ENCODE measurements at regions of chr5 and their contacts with region 1.

Region 1: GRCh38 chr5:36944607-36945225 is 68.1 kb downstream of the NIPBL start:
- DNase-seq: peak; percentile 60
- H3K4me3 Mint-ChIP-seq: no peak overlapping the region
- H3K27ac Mint-ChIP-seq: no peak overlapping the region
- H3K4me1 Mint-ChIP-seq: peaks cover 19% of the 10 kb centered on the region
- H3K27me3 Mint-ChIP-seq: no peaks in the 10 kb centered on the region
- CTCF ChIP-seq: peak; percentile 37

Region 2: DNA sequence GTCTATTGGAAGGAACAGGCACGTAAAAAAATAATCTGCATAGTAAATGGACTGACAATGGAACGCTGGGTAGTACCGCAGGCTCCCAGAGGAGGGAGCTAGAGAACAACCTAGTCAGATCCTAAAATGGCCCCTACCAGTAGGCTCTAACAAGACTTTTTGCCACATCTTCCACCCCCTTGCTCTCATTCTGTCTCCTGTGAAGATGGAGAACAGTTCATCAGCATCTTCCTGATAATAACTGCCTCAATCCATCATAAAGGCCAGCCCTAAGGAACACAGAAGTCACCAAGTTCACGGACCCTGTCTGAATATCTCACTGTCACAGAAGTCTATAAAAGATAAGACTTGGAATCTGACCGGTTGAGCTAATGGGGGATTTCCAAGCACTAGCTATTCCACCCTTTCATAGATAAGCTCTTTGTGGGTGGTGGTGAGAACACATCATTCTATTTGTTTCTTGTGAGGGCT is 204.9 kb before region 1 on chr5:
- CTCF ChIA-PET with region 1: interaction called, 7 read pairs
- POLR2A ChIA-PET with region 1: no interaction called
- intact Hi-C with region 1: loop called (anchors 2 kb)
- DNase-seq: peak; percentile 77
- H3K4me3 Mint-ChIP-seq: no peak overlapping the region
- H3K27ac Mint-ChIP-seq: no peak overlapping the region
- H3K4me1 Mint-ChIP-seq: peaks cover 8% of the 10 kb centered on the region
- H3K27me3 Mint-ChIP-seq: peaks cover 15% of the 10 kb centered on the region
- CTCF ChIP-seq: peak; percentile 87

Measured in MCF 10A (cell line).